BJ (cell line): ENCODE measurements at regions of chr6 and their contacts with region 1.

Region 1: DNA sequence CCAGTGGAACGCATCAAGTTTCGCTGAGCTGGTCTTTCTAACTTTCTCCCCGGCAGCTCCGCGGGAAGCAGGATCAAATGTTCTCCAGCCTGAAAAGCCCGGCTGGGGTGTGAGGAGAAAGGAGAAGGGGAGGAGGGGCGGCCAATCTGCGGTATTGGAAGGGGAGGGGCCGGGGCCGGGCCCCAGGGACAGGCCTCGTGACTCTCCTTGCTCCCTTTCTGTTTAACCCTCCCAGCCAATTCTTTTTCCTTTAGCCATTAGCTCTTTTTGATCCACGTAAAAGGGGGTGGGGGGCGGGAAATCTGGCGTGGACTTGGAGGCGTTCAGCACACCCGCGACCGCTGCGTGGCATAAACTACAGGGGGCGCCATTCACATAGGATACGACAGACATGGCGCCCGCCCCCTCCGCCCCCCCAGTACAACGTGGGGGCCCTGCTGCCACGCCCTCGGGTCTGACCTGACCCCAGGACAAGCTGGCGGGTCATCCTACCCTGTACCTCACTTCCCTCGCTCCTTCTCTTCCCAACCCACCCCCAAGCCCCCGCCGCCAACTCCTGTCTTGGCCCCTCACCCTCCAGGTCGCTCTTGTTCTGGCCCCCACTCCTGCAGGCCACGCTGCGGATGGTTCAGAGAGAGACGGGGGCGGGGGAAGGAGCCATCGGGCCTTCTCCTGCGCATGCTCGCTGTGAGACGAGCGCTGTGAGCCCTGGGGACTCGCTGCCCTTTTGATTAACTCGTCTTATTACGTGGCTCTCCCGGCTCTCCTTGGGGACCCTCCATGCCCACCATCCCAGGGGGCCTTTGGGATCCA is 7.8 kb upstream of the MDGA1 start:
- DNase-seq: no peak
- H3K4me3 ChIP-seq: peak overlapping the region; percentile 25
- H3K27me3 ChIP-seq: no peaks in the 10 kb centered on the region
- CTCF ChIP-seq: peak; percentile 78

Region 2: DNA sequence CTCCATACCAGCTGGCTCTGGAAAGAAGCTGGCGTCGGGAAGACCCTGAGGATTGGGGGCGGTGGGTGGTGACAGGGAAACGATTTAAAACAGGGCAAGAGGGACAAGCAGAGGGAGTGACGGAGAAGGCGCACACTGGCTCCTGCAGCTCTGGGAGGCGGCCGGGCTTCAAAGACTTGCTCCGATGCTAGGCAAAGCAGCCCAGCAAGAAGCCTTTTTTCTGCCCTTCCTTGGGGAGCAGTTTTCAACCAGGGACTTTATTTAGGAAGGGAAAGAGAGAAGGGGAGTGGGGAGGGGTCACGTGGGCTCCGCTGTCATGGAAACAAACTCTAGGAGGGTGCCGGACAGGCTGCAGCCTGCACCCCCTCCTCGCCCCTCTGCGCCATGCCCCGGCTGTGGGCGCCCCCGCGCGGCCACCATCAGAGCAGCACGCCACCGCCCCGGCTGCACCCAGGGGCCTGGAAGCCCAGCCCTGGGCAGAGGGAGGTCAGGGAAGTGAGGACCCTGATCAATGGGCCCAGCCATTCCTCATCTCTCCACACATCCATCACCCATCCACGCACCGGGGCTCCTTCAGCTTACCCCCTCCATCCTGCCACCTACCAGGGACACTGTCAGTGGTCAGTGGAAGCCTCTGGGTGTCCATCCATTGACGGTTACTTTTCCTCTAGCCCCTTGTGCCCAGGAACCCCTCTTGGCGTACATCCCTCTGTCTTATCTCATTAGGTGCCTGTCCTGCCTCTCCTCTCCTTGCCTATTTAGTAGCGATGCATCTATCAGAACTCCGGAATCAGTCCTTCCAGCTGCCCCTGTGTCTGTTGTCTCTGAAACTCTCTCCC is 139.1 kb before region 1 on chr6:
- CTCF ChIA-PET with region 1: no interaction called
- POLR2A ChIA-PET with region 1: no interaction called
- DNase-seq: no peak
- H3K4me3 ChIP-seq: peak overlapping the region; percentile 34
- H3K27me3 ChIP-seq: peaks cover 19% of the 10 kb centered on the region
- CTCF ChIP-seq: peak; percentile 82

Region 3: GRCh38 chr6:37646097-37646864 is 59.2 kb before region 1 on chr6:
- CTCF ChIA-PET with region 1: interaction called, 3 read pairs
- POLR2A ChIA-PET with region 1: interaction called, 10 read pairs
- DNase-seq: no peak
- H3K4me3 ChIP-seq: no peak overlapping the region
- H3K27me3 ChIP-seq: peaks cover 3% of the 10 kb centered on the region
- CTCF ChIP-seq: no peak

Region 4: DNA sequence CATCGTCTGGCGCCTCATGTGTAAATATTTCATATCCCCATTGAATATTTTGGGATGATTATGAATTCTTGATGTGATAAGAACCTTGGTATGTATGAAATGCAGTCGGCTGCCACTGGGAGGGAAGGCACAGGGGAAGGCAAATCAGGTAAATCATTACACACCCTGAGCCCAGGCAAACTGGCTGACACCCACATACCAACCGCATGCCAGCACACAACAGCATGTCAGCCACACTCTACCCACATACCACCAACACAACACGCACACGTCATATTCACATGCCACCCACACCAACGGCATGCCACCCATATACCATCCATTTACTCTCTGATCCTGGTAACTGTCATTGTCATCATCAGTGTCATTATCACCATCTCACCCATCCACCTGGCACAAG is 20.5 kb after region 1 on chr6:
- CTCF ChIA-PET with region 1: interaction called, 10 read pairs
- POLR2A ChIA-PET with region 1: no interaction called
- DNase-seq: no peak
- H3K4me3 ChIP-seq: no peak overlapping the region
- H3K27me3 ChIP-seq: no peaks in the 10 kb centered on the region; the same call in 1 of the 2 replicates
- CTCF ChIP-seq: no peak

Region 5: DNA sequence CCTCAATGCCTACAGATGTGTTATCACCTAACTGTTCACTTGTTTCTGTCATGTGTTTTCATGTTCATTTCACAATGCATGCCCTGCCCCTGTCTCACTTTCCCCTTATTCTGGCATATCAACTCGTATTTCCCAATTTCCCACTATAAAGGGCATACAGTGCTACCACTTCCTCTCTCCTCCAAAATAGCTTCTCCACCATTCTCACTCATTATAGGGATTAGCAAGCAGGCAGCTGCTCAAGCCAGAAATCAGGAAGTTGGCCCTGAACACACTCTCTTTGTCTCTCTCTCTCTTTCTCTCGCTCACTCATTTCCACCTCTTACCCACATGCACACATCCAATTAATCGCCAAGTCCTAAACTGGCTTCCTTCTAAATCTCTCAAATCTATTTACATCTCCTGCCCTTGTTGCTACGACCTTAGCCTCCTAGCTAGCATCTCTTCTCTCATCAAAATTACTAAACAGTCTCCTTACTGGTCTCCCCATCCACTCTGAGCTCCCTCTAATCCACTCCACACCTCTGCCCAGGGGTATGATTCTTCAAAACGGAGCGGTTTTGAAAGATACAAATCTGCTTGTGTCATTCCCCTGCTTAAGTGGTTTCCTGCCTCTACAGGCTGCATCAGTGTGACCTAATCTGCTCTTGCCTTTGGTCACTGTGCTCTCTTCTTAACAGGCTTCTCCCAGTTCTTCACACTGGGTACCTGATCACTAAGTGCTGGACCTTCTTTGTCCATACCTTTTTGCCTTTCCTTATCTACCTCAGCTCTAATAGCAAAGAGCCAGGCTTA is 738.1 kb after region 1 on chr6:
- CTCF ChIA-PET with region 1: no interaction called
- POLR2A ChIA-PET with region 1: no interaction called
- DNase-seq: no peak
- H3K4me3 ChIP-seq: no peak overlapping the region
- H3K27me3 ChIP-seq: no peaks in the 10 kb centered on the region
- CTCF ChIP-seq: no peak